Activated CD4-positive, alpha-beta memory T cell treated with anti-CD3 and anti-CD28 coated beads, Interleukin-2, amount 10 ng/mL, durations not matched to agents 7 days and 5 days (primary cell): ENCODE measurements at regions of chr5 and their contacts with region 1.

Region 1: DNA sequence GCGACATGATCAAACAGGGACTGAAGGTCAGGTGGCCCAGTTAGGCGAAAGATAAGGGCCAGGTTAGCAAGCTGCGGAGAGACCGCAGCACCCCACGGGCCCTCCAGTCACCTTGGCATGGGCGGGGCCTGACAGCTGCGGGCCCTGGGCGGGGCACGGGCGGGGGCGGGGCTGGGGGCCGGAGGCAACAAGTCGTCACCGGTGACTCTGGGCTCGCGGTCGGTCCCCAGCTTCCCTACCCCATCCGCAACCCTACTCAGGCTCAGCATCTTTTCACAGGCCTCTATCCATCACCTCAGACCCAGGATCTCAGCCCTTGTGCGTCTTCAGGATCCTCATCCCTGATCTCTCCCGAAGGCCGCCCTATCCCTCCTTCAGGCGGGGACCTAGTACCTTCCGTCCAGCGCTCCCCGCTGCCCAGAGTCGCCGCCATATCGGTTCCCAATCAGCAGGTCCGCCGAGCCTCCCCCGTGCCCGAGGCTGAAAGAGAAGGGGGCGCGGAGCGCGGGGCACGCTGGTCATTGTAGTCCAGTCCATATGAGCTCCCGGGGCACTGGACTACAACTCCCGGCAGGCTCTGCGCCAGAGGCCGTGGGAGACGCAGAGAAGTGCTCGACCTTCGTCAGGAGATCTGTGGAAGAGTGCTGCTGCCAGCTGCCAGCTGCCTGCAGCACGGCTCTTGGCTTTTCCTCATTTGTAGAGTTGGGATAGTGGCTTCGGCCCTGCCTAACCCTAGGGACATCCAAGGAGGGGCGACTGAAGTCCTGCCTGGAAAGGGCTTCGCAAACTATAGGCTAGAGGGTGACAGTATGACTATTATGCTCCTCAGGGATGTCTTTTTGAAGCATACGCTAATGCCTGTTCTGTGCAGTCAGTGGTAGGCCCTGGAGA is at the start of gene DNAJC18:
- DNase-seq: peak; percentile 92
- H3K4me3 Mint-ChIP-seq: peak within 1 kb of the TSS; percentile 92
- H3K27ac Mint-ChIP-seq: peak within 1 kb of the TSS; percentile 98
- H3K4me1 Mint-ChIP-seq: peaks cover 70% of the 10 kb centered on the region
- H3K27me3 Mint-ChIP-seq: no peaks in the 10 kb centered on the region
- total RNA-seq, gene DNAJC18: 16.1 to 17.0 TPM

Region 2: DNA sequence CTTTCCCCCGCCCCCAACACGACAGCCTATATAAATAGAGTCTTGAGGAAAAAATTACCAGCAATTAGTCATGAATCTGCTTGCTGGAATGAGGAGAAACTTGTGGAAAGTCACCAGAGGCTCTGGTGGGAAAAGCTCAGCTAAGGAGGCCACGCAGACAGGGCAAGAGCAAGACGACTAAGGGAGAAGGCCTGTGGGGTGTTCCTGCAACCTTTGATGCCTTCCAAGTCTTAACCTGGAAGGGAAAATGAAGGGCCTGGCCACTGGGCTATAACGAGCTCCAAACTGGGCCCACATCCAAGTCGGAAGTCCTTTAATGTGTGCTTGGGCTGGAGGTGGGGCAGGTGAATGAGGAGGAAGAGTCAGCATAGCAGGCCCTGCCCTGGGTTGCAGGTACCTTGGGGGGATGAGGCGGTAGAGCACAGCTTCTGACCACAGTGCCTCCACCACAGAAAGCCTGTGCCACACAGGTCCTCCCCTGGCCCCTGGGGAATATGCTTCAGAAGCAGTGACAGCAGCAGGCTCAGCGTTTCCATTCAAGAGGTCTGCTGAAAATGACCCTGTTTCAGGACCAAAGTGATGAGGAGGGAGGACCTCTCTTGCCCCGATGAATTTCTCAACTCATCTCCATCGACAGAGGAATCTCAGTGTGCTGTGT is 471.3 kb before region 1 on chr5:
- CTCF ChIA-PET with region 1: no interaction called
- POLR2A ChIA-PET with region 1: no interaction called
- DNase-seq: no peak
- H3K4me3 Mint-ChIP-seq: no peak overlapping the region
- H3K27ac Mint-ChIP-seq: no peak overlapping the region
- H3K4me1 Mint-ChIP-seq: no peaks in the 10 kb centered on the region
- H3K27me3 Mint-ChIP-seq: no peaks in the 10 kb centered on the region

Region 3: GRCh38 chr5:139108063-139108824 is 331.0 kb before region 1 on chr5:
- CTCF ChIA-PET with region 1: no interaction called
- POLR2A ChIA-PET with region 1: no interaction called
- DNase-seq: no peak
- H3K4me3 Mint-ChIP-seq: no peak overlapping the region
- H3K27ac Mint-ChIP-seq: no peak overlapping the region
- H3K4me1 Mint-ChIP-seq: no peaks in the 10 kb centered on the region
- H3K27me3 Mint-ChIP-seq: no peaks in the 10 kb centered on the region

Region 4: GRCh38 chr5:139368613-139369012 is 70.6 kb before region 1 on chr5:
- CTCF ChIA-PET with region 1: no interaction called
- POLR2A ChIA-PET with region 1: no interaction called
- DNase-seq: no peak
- H3K4me3 Mint-ChIP-seq: no peak overlapping the region
- H3K27ac Mint-ChIP-seq: no peak overlapping the region
- H3K4me1 Mint-ChIP-seq: peaks cover 21% of the 10 kb centered on the region
- H3K27me3 Mint-ChIP-seq: no peaks in the 10 kb centered on the region

Region 5: GRCh38 chr5:139417214-139417613 is 22.0 kb before region 1 on chr5:
- CTCF ChIA-PET with region 1: interaction called, 45 read pairs
- POLR2A ChIA-PET with region 1: interaction called, 11 read pairs
- DNase-seq: no peak
- H3K4me3 Mint-ChIP-seq: no peak overlapping the region
- H3K27ac Mint-ChIP-seq: peak overlapping the region; percentile 93
- H3K4me1 Mint-ChIP-seq: peaks cover 83% of the 10 kb centered on the region
- H3K27me3 Mint-ChIP-seq: no peaks in the 10 kb centered on the region

Region 6: GRCh38 chr5:139422307-139422893 is 16.9 kb before region 1 on chr5:
- CTCF ChIA-PET with region 1: interaction called, 45 read pairs
- POLR2A ChIA-PET with region 1: interaction called, 11 read pairs
- DNase-seq: peak; percentile 59
- H3K4me3 Mint-ChIP-seq: no peak overlapping the region
- H3K27ac Mint-ChIP-seq: peak overlapping the region; percentile 36
- H3K4me1 Mint-ChIP-seq: peaks cover 46% of the 10 kb centered on the region
- H3K27me3 Mint-ChIP-seq: no peaks in the 10 kb centered on the region

Region 7: DNA sequence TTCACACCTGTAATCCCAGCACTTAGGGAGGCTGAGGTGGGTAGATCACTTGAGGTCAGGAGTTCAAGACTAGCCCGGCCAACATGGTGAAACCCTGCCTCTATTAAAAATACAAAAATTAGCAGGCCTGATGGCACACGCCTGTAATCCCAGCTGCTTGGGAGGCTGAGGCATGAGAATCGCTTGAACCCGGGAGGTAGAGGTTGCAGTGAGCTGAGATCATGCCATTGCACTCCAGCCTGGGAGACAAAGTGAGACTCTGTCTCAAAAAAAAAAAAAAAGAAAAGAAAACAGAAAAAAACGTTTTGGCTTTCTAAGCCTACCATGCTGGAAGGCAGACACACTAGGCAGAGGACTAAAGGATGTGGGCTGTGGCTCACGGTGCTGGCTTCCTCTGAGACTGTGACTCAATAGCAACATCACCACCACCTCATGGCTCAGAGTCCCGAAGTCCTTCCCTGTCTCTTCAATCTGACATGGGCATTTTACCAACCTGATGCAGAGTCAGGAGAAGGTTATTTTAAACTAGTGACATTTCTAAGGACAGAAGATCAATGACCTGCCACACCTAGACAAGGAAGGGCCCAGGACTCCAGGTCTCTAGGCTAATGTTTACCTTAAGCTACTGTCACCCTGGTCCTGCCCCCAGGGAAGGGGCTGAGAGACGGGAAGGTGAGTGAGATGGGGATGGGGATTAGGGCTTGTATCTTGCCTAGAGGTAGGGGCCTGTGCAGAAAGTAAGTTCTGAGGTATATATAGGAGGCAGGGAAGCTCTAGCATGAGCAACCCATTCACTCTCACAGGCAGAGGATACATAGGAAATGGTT is 19.5 kb after region 1 on chr5:
- CTCF ChIA-PET with region 1: interaction called, 8 read pairs
- POLR2A ChIA-PET with region 1: interaction called, 73 read pairs
- DNase-seq: peak; percentile 90
- H3K4me3 Mint-ChIP-seq: peak overlapping the region; percentile 68
- H3K27ac Mint-ChIP-seq: peak overlapping the region; percentile 98
- H3K4me1 Mint-ChIP-seq: peaks cover 68% of the 10 kb centered on the region
- H3K27me3 Mint-ChIP-seq: no peaks in the 10 kb centered on the region

Region 8: DNA sequence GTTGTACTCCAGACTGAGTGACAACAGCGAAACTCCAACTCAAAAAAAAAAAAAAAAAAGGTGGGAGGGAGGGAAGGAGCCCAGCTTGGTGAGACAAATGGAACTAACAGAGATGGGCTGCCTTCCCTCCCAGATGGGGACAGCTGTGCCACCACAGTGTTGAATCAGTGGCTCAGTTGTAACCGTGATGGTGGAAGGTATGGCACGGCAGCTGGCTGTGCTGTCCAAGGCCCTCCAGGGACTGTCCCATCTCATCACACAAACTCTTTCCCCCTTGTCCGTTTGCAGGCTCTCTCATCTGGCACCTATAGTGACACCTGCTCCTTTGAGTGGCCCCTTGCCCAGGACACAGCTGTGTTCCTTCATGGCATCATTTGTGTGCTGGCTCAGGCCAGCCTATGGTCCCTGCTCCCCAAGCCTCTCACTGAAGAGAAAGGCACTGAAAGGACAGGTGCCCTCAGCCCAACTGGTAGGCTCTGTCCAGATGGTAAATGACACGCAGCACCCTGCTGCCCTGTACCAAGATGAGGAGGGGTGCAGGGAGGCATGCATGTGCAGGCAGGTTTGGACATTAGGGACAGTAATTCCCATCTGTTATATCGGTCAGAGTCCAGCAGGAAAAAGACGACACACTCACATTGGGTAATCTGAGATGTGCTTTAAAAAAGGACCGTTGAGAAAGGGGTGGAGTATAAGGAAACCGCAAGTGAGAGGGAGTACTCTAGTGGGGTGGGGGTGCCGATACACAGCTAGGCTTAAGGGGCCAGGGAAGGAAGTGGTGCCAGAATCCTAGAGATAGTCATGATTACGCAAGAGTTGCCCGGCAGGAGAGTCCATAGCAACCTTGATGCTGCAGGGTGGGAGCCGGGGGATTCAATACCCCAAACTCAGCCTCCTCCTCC is 35.9 kb after region 1 on chr5:
- CTCF ChIA-PET with region 1: interaction called, 5 read pairs
- POLR2A ChIA-PET with region 1: interaction called, 38 read pairs
- DNase-seq: no peak
- H3K4me3 Mint-ChIP-seq: peak overlapping the region; percentile 3
- H3K27ac Mint-ChIP-seq: peak overlapping the region; percentile 80
- H3K4me1 Mint-ChIP-seq: peaks cover 88% of the 10 kb centered on the region
- H3K27me3 Mint-ChIP-seq: no peaks in the 10 kb centered on the region

Region 9: GRCh38 chr5:139560752-139561654 is 121.7 kb after region 1 on chr5 and contains the start of gene UBE2D2:
- CTCF ChIA-PET with region 1: interaction called, 5 read pairs
- POLR2A ChIA-PET with region 1: interaction called, 23 read pairs
- DNase-seq: peak; percentile 98
- H3K4me3 Mint-ChIP-seq: peak within 1 kb of the TSS; percentile 95
- H3K27ac Mint-ChIP-seq: peak within 1 kb of the TSS; percentile 95
- H3K4me1 Mint-ChIP-seq: peaks cover 36% of the 10 kb centered on the region
- H3K27me3 Mint-ChIP-seq: no peaks in the 10 kb centered on the region
- total RNA-seq, gene UBE2D2: 241 to 244 TPM